CD14-positive monocyte (primary cell): ENCODE measurements at regions of chr19 and their contacts with region 1.

Region 1: GRCh38 chr19:8615813-8616596 is 5.5 kb upstream of the ADAMTS10 start:
- DNase-seq: peak; percentile 73 to 84 (median 76)
- H3K4me3 ChIP-seq: peak overlapping the region in 1 of 3 experiments; percentile 21
- H3K4me3 Mint-ChIP-seq: peak overlapping the region; percentile 59 to 73
- H3K27ac ChIP-seq: no peak overlapping the region
- H3K27ac Mint-ChIP-seq: no peak overlapping the region
- H3K4me1 ChIP-seq: peaks cover 6 to 7% of the 10 kb centered on the region in 2 donors
- H3K4me1 Mint-ChIP-seq: peaks cover 9% of the 10 kb centered on the region
- H3K27me3 ChIP-seq: peaks cover 0 to 11% of the 10 kb centered on the region in 2 donors
- H3K27me3 Mint-ChIP-seq: peaks cover 10 to 35% (median 24%) of the 10 kb centered on the region in 3 donors
- CTCF ChIP-seq: peak; percentile 95

Region 2: DNA sequence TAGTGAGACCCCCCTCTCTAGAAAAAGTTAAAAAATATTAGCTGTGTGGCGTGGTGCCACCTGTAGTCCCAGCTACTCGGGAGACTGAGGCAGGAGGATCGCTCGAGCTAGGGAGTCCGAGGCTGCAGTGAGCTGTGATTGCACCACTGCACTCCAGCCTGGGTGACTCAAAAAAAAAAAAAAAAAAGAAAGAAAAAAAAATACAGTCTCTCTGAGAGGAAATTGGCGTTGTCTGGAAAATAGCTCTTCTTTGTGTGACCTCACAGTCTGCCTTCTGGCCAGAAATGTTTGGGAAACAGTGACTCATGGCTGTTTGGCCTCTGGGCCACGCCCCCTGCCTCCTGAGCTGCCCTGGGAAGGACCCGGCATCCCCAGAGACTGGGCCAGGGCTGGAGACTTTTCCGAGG is 192.2 kb before region 1 on chr19:
- intact Hi-C with region 1: no loop called
- DNase-seq: peak; percentile 90 to 97 (median 96)
- H3K4me3 ChIP-seq: peak overlapping the region in 2 of 3 experiments; percentile 3 to 58
- H3K4me3 Mint-ChIP-seq: peak overlapping the region; percentile 69 to 78
- H3K27ac ChIP-seq: peak overlapping the region; percentile 87 to 93
- H3K27ac Mint-ChIP-seq: peak overlapping the region; percentile 97 to 98 (median 97)
- H3K4me1 ChIP-seq: peaks cover 17 to 21% of the 10 kb centered on the region in 2 donors
- H3K4me1 Mint-ChIP-seq: peaks cover 19% of the 10 kb centered on the region
- H3K27me3 ChIP-seq: no peaks in the 10 kb centered on the region
- H3K27me3 Mint-ChIP-seq: peaks cover 0 to 6% (median 0%) of the 10 kb centered on the region in 3 donors
- CTCF ChIP-seq: no peak

Region 3: GRCh38 chr19:8697671-8698432 is 81.8 kb after region 1 on chr19:
- intact Hi-C with region 1: loop called (anchors 2 to 10 kb)
- DNase-seq: no peak
- H3K4me3 ChIP-seq: no peak overlapping the region
- H3K4me3 Mint-ChIP-seq: no peak overlapping the region
- H3K27ac ChIP-seq: no peak overlapping the region
- H3K27ac Mint-ChIP-seq: no peak overlapping the region
- H3K4me1 ChIP-seq: peaks cover 15 to 23% of the 10 kb centered on the region in 2 donors
- H3K4me1 Mint-ChIP-seq: peaks cover 25% of the 10 kb centered on the region
- H3K27me3 ChIP-seq: no peaks in the 10 kb centered on the region
- H3K27me3 Mint-ChIP-seq: peaks cover 18 to 54% (median 25%) of the 10 kb centered on the region in 3 donors
- CTCF ChIP-seq: peak; percentile 16

Region 4: GRCh38 chr19:8866344-8866743 is 250.3 kb after region 1 on chr19:
- intact Hi-C with region 1: no loop called
- DNase-seq: no peak
- H3K4me3 ChIP-seq: no peak overlapping the region
- H3K4me3 Mint-ChIP-seq: no peak overlapping the region
- H3K27ac ChIP-seq: no peak overlapping the region
- H3K27ac Mint-ChIP-seq: no peak overlapping the region
- H3K4me1 ChIP-seq: no peaks in the 10 kb centered on the region
- H3K4me1 Mint-ChIP-seq: no peaks in the 10 kb centered on the region
- H3K27me3 ChIP-seq: no peaks in the 10 kb centered on the region
- H3K27me3 Mint-ChIP-seq: peaks cover 0 to 4% (median 3%) of the 10 kb centered on the region in 3 donors
- CTCF ChIP-seq: no peak